Activated naive CD4-positive, alpha-beta T cell treated with anti-CD3 and anti-CD28 coated beads for 36 hours (primary cell): ENCODE measurements at regions of chr3 and their contacts with region 1.

Region 1: GRCh38 chr3:109927161-109927560 is 589.8 kb upstream of the DPPA4 start:
- DNase-seq: peak; percentile 58
- H3K4me3 Mint-ChIP-seq: no peak overlapping the region
- H3K27ac Mint-ChIP-seq: no peak overlapping the region
- H3K4me1 Mint-ChIP-seq: peaks cover 12% of the 10 kb centered on the region
- H3K27me3 Mint-ChIP-seq: peaks cover 2% of the 10 kb centered on the region

Region 2: DNA sequence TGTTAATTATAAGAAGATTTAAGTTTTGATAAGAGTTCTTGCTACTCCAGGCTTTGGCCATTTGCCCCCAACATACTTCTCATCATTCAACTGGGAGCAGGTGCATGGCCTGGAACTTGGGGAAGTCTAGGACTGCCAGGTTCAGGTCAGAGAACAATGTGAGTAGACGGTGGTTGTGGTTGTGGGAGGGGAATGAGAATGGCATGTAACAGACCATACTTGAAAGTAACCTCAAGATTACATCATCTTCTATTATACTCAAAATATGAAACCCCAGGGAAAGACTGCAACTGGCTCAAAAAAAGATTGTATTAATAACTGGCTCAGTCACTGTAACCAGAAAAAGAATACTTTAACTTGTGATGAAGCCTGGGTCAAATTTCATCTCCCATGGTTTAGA is 224.9 kb before region 1 on chr3:
- CTCF ChIA-PET with region 1: no interaction called
- intact Hi-C with region 1: loop called (anchors 1 kb)
- DNase-seq: peak; percentile 56
- H3K4me3 Mint-ChIP-seq: no peak overlapping the region
- H3K27ac Mint-ChIP-seq: no peak overlapping the region
- H3K4me1 Mint-ChIP-seq: peaks cover 13% of the 10 kb centered on the region
- H3K27me3 Mint-ChIP-seq: peaks cover 3% of the 10 kb centered on the region

Region 3: DNA sequence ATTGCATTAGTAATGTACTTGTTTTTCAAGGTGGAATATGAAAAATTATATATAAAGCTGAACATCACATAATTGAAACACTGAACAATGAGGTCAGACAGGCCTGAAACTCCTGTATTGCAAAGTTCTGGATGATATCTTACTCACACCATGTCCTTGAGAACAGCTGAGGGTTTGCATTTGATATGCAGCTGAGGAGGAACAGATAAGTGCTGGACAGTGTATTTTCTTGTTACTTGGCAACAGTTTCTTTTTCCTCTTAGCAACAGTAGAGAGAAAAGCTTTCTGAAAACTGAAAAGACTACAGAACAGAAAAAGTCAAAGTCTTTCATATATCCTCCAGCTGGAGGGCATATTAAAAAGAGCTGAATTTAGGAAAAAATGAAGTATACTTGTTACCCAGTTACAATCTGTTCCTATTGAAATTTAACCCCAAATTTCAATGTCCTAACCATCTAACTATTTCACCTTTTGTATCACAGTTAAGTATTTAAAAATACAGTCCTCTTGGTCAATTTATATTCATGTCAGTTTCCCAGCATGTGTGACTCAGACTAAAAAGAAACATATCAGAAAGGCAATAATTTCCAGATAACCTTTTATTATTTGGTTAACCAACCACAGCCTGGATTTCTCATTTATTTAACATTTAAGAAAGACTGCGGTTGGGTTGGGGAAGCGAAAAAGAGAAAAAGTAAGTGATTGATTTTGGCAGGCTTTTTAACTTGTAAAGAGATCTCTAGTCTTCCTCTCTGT is 143.2 kb after region 1 on chr3:
- CTCF ChIA-PET with region 1: interaction called, 3 read pairs
- intact Hi-C with region 1: loop called (anchors 1 kb)
- DNase-seq: no peak
- H3K4me3 Mint-ChIP-seq: no peak overlapping the region
- H3K27ac Mint-ChIP-seq: no peak overlapping the region
- H3K4me1 Mint-ChIP-seq: peaks cover 12% of the 10 kb centered on the region
- H3K27me3 Mint-ChIP-seq: no peaks in the 10 kb centered on the region

Region 4: DNA sequence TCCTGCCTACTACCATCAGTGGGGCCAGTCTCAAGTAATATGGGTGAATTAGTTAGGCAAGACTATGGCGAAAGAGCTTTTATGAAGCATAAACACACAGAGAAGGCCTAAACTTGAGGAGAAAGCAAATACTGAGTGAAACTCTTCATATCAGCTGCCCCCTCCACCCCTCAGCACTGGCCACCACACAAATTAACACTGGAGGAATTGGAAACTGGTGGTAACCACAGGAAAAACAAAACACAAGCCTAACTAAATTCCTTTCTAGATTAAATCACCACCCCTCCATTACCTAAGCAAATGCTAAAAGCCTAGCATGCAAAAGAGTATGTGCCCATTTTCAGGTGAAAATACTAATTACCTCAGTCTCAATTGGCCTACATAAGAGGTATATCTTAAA is 369.7 kb after region 1 on chr3:
- CTCF ChIA-PET with region 1: no interaction called
- intact Hi-C with region 1: loop called (anchors 1 kb)
- DNase-seq: no peak
- H3K4me3 Mint-ChIP-seq: no peak overlapping the region
- H3K27ac Mint-ChIP-seq: no peak overlapping the region
- H3K4me1 Mint-ChIP-seq: no peaks in the 10 kb centered on the region
- H3K27me3 Mint-ChIP-seq: peaks cover 2% of the 10 kb centered on the region

Region 5: GRCh38 chr3:111311709-111312235 is 1384.6 kb after region 1 on chr3:
- CTCF ChIA-PET with region 1: no interaction called
- intact Hi-C with region 1: loop called (anchors 2 kb)
- DNase-seq: no peak
- H3K4me3 Mint-ChIP-seq: no peak overlapping the region
- H3K27ac Mint-ChIP-seq: peak overlapping the region; percentile 37
- H3K4me1 Mint-ChIP-seq: peaks cover 33% of the 10 kb centered on the region
- H3K27me3 Mint-ChIP-seq: no peaks in the 10 kb centered on the region